A549 (cell line): ENCODE measurements at regions of chr17 and their contacts with region 1.

Region 1: DNA sequence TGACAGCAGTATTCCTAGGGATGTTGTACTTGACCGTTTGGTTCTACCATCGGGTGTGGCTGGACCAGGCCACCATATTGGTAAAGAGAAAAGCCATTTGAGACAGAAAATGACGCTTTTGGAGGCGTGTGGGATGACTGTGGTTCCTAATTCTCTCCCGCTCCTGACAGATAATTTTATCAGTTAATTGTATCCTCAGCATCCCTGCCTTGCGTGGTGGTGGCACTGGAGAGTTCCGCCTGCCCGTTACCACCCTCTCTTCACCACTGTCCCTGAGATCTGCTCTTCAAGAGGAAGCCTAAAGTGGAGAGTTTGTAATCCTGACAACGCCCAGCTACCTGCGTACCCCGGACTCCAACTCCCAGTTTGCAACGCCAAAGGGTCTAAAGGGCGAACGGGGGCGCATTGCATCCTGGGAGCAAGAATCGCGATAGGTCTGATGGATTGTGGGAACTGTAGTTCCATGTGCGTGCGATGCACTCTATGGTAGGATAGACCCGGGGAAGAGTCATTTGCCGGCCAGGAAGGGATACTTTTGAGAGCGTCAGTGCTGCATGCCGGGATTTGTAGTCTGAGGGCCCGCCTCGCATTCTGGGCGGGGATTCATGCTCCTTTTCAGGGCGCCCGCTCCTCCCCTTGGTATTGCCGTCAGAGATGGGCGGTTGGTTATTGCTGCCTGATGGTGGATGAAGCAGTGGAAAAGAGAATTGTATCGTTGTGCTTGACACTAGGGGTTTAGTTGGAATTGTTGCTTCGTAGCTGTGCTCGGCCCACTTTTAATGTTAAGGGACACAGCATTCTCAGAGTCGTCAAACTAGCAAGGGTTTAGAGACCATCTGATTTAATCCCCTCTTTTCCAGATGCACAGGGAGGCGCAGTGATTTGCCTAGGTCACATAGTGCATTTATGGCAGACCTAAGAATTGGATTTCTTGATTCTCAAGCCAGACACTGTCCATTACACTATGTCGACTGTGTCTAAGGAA is 965 bp upstream of the PHF12 start:
- DNase-seq: peak; percentile 100
- ATAC-seq: peak; percentile 75 to 91
- H3K4me3 ChIP-seq: peak overlapping the region; percentile 56
- H3K27ac ChIP-seq: peak overlapping the region; percentile 89 to 91
- H3K4me1 ChIP-seq: peaks cover 21% of the 10 kb centered on the region
- CTCF ChIP-seq: no peak
- EP300 ChIP-seq: no peak
- POLR2A ChIP-seq: peak; percentile 16
- RAD21 ChIP-seq: no peak

Region 2: GRCh38 chr17:28717578-28718333 is 234.5 kb before region 1 on chr17 and contains the start of gene RAB34:
- CTCF ChIA-PET with region 1: interaction called, 5 read pairs
- POLR2A ChIA-PET with region 1: interaction called, 23 read pairs
- DNase-seq: peak; percentile 73 to 90
- ATAC-seq: peak; percentile 67 to 69
- H3K4me3 ChIP-seq: peak within 1 kb of the TSS; percentile 77
- H3K27ac ChIP-seq: peak within 1 kb of the TSS; percentile 96
- H3K4me1 ChIP-seq: peaks cover 37% of the 10 kb centered on the region
- CTCF ChIP-seq: peak; percentile 55
- EP300 ChIP-seq: no peak
- POLR2A ChIP-seq: peak; percentile 48
- RAD21 ChIP-seq: no peak
- polyA plus RNA-seq, gene RAB34: 288 and 328 TPM in 2 replicates

Region 3: GRCh38 chr17:28916302-28916934 is 35.9 kb before region 1 on chr17:
- CTCF ChIA-PET with region 1: interaction called, 11 read pairs
- POLR2A ChIA-PET with region 1: no interaction called
- DNase-seq: peak; percentile 61 to 63
- ATAC-seq: peak; percentile 69 to 87
- H3K4me3 ChIP-seq: no peak overlapping the region
- H3K27ac ChIP-seq: no peak overlapping the region
- H3K4me1 ChIP-seq: no peaks in the 10 kb centered on the region
- CTCF ChIP-seq: peak; percentile 77
- EP300 ChIP-seq: no peak
- POLR2A ChIP-seq: no peak
- RAD21 ChIP-seq: peak; percentile 68 to 69

Region 4: GRCh38 chr17:28967221-28968140 is 15.2 kb after region 1 on chr17:
- CTCF ChIA-PET with region 1: interaction called, 84 read pairs
- POLR2A ChIA-PET with region 1: interaction called, 7 read pairs
- DNase-seq: no peak
- ATAC-seq: no peak
- H3K4me3 ChIP-seq: no peak overlapping the region
- H3K27ac ChIP-seq: no peak overlapping the region
- H3K4me1 ChIP-seq: 0 out of 3 replicates have a peak, but pooled peaks cover 6% of the 10 kb centered on the region
- CTCF ChIP-seq: no peak
- EP300 ChIP-seq: no peak
- POLR2A ChIP-seq: no peak
- RAD21 ChIP-seq: no peak

Region 5: DNA sequence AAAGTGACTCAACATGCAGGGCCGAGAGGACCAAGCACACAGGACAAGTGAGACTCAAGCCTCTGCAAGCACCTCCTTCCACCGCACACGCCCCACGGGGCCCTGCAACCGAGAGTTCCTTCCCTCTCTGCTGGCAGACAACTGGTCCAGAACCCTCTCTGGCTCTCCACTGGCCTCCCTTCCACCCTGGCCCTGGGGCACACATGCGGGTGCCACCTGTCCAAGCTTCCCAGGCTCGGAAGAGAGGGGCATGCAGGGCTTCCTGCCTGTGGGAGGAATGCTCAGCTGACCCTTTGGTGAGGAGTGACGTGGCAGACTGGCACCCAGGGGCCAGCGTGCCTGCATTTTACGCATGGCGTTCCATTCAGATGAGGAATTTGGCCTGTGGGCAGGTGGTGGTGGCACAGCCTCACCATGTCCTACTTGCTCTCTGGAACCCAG is 150.5 kb after region 1 on chr17:
- CTCF ChIA-PET with region 1: interaction called, 1,025 read pairs
- POLR2A ChIA-PET with region 1: no interaction called
- DNase-seq: no peak
- ATAC-seq: no peak
- H3K4me3 ChIP-seq: no peak overlapping the region
- H3K27ac ChIP-seq: no peak overlapping the region
- H3K4me1 ChIP-seq: peaks cover 7% of the 10 kb centered on the region
- CTCF ChIP-seq: no peak
- EP300 ChIP-seq: no peak
- POLR2A ChIP-seq: no peak
- RAD21 ChIP-seq: no peak

Region 6: DNA sequence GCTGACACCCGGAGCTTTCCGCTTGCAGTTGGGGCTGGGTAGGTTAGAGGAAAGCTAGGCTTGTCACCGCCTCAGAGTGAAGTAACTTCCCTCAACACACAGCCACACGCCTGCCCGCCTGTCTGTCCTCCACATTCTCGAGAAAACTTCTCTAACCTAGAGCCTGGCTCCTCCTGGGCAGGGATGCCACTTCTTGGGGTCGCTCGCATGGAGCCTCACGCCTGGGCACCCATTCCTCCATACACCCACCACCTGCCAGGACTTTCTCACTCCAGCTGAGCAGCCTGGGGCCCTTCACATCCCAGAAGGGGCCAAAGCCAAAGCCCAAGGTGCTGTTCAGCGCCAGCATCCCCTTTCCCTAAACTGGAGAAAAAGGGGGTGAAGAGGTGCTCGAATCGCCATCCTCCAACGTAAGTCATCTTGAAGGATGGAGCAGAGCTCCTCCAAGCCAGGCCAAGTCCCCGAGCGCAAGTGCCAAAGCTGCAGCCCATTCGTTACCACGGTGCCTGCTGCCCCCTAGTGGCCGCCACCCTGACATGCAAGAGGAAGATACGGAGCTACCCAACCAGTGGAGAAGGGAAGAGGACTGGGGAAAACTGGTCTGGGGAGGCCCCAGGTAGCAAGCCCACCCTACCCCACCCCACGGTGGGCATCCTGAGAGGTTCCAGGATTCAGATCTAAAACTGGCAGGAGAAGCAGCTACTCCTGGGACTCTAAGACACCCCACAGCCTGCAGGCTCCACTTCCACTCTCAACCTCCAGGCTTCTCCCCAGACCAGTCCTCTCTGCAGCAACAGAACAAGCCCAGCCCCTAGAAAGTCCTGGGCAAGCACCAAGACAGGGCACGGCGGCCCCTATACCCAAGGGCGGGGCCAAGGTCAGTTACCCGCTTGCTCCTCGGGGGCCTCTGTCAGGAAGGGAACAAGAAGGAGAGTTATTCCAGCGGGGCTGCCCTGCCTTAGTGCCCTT is 164.8 kb after region 1 on chr17:
- CTCF ChIA-PET with region 1: interaction called, 1,025 read pairs
- POLR2A ChIA-PET with region 1: interaction called, 5 read pairs
- DNase-seq: peak; percentile 76 to 82
- ATAC-seq: peak; percentile 65 to 82
- H3K4me3 ChIP-seq: no peak overlapping the region
- H3K27ac ChIP-seq: no peak overlapping the region
- H3K4me1 ChIP-seq: no peaks in the 10 kb centered on the region
- CTCF ChIP-seq: peak; percentile 94
- EP300 ChIP-seq: no peak
- POLR2A ChIP-seq: no peak
- RAD21 ChIP-seq: peak; percentile 75 to 82